Activated CD4-positive, alpha-beta memory T cell treated with anti-CD3 and anti-CD28 coated beads for 36 hours (primary cell): ENCODE measurements at regions of chr7 and their contacts with region 1.

Region 1: DNA sequence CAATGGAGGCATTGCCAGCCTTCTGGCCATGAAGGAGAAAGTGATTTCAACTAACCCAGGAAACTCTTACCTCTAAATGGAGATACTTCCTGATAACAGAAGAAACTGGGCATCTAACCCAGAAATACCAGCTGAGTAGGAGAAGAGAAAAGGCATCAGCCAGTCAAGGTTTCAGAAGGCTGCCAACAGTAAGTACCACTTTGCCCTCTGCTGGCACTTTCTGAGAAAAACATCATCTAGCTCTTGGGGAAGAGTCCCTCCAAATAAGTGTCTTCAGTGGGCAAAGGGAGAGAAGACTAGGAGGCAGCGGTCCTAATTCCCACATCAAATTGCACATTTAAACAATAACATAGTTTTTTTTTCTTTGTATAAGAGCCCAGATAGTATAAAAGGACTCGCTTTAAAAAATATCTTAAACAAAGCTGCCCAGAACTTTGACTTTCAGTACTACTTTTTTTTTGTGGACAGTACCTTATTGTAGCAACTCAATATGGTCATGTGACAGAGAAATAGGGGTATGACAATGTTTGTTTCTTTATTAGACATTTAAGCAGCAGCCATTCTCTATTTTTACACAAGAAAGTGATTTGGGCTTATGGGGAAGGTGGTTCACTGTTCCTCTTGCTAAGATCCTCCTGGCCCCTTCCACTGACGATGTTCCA is 157.3 kb downstream of the CTTNBP2 start:
- DNase-seq: no peak
- H3K4me3 Mint-ChIP-seq: no peak overlapping the region
- H3K27ac Mint-ChIP-seq: no peak overlapping the region
- H3K4me1 Mint-ChIP-seq: no peaks in the 10 kb centered on the region
- H3K27me3 Mint-ChIP-seq: no peaks in the 10 kb centered on the region

Region 2: DNA sequence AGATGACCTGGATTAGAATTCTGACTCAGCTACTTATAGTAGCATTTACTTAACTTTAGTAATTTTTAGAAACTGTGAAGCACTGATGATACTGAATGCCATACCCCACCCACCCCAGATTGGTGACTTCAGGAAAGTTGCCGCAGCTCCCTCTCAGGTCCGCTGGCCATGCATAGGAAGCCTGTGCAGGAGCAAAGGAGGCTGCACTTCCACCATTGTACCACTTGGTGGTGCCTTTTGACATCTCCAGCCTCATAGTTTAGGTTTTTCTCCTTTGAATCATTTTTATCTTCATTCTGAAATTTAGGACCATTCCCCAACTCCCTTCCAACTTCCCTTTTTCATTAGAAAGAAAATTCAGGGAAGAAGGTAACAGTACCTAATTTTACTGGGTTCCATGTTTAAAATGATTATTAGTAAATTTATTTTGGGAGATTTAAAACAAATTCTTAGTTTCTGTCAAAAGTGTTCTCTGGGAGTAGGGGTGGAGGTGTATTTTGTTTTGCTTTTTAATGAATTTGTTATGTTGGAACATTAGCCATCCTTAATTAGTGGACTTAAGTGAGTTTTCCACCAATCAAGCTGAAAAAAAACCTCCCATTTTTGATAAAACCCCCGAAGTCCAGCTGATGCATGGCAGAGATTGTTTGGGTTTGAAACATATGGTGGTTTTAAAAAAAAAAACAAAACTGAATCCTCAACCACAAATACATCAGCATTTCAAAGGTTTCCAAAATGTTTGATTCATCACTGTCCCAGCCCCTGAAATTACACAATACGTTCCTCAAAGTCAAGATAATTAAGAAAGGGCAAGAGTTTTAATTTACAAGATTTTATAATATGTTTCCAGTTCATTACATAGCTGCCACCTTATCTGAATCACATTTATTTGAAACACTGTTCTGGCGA is 502.7 kb before region 1 on chr7:
- CTCF ChIA-PET with region 1: interaction called, 6 read pairs
- POLR2A ChIA-PET with region 1: no interaction called
- intact Hi-C with region 1: loop called (anchors 2 kb)
- DNase-seq: peak; percentile 59
- H3K4me3 Mint-ChIP-seq: no peak overlapping the region
- H3K27ac Mint-ChIP-seq: no peak overlapping the region
- H3K4me1 Mint-ChIP-seq: no peaks in the 10 kb centered on the region
- H3K27me3 Mint-ChIP-seq: no peaks in the 10 kb centered on the region

Region 3: GRCh38 chr7:117399820-117400422 is 316.0 kb before region 1 on chr7:
- CTCF ChIA-PET with region 1: no interaction called
- POLR2A ChIA-PET with region 1: no interaction called
- intact Hi-C with region 1: loop called (anchors 2 kb)
- DNase-seq: no peak
- H3K4me3 Mint-ChIP-seq: no peak overlapping the region
- H3K27ac Mint-ChIP-seq: no peak overlapping the region
- H3K4me1 Mint-ChIP-seq: no peaks in the 10 kb centered on the region
- H3K27me3 Mint-ChIP-seq: no peaks in the 10 kb centered on the region

Region 4: DNA sequence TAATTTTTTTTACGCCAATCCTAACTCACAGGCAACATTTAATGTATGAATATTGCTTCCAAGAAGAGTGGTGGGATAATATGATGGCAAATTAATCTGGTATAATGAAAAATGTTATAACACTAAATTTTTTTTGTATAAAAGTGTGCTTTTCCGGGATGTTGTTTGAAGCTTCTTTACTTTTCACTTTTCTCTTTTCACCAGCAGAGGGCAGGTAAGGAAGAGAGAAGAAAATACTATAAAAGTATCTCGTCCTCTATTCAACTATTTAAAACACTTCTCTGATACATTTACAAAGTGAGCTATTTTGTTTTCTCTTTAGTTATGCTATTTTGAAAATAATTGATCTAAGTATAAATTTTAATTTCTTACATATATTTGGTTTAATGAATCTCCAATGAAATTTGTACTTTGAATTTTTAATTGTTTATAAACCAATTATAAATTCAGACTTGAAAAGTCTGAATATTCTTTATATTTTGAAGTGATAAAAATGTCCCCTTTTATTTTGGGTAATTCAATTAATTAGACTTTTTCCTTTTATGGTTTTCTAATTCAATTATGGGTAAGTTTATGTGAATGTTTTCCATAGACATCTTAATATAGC is 256.8 kb before region 1 on chr7:
- CTCF ChIA-PET with region 1: interaction called, 8 read pairs
- POLR2A ChIA-PET with region 1: no interaction called
- intact Hi-C with region 1: loop called (anchors 10 kb)
- DNase-seq: no peak
- H3K4me3 Mint-ChIP-seq: no peak overlapping the region
- H3K27ac Mint-ChIP-seq: no peak overlapping the region
- H3K4me1 Mint-ChIP-seq: no peaks in the 10 kb centered on the region
- H3K27me3 Mint-ChIP-seq: no peaks in the 10 kb centered on the region